ENCODE measurements at regions of chr11 and their contacts with region 1.

Region 1: DNA sequence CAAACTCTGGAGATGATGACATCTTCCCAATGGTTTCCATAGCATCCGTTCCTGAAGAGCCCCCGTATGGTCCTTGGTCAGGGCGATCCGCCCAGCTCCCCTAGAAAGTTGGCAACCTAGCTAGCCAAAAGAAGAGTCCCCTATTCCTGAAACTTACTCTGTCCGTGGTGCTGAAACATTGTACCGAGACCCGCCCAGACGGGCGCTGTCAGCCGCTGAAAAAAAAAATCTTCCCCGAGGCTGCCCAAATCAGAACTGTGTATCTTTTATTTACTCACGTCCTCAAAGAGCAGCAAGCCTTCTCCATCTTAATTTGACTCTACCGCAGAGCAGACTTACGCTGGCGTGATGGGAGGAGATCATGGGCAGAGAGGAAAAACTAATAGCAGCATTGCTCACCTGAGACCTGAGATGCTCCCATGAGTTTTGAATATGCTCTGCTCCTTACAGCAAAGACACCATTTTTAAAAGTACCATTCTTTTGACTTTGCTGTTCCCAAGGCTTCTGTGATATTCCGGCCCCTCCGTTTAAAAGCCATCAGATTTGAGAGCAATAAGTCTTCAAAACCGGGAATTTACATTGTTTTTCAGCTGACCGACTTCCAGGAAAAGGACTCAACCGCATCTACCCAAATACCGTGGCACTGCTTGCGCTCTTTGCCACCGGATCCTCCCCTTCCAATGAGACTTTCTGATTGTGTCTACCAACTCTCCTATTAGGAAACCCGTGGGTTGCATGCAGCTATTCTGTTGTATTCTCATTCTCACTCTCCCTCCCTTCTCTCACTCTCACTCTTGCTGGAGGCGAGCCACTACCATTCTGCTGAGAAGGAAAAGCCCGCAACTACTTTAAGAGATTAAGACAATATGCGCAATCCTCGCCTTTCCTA is at the start of gene SLC17A6:
- DNase-seq: peak in 1 of 2 experiments; percentile 58
- H3K4me3 ChIP-seq: no peak within 1 kb of the TSS
- H3K4me3 Mint-ChIP-seq: no peak within 1 kb of the TSS
- H3K27ac Mint-ChIP-seq: no peak within 1 kb of the TSS
- H3K4me1 ChIP-seq: no peaks in the 10 kb centered on the region
- H3K4me1 Mint-ChIP-seq: no peaks in the 10 kb centered on the region
- H3K27me3 ChIP-seq: no peaks in the 10 kb centered on the region
- H3K27me3 Mint-ChIP-seq: peaks cover 12% of the 10 kb centered on the region
- CTCF ChIP-seq: no peak
- total RNA-seq, gene SLC17A6: not detected in 2 replicates

Region 2: GRCh38 chr11:22349491-22349890 is 11.7 kb after region 1 on chr11:
- CTCF ChIA-PET with region 1: no interaction called
- POLR2A ChIA-PET with region 1: no interaction called
- intact Hi-C with region 1: no loop called
- DNase-seq: no peak
- H3K4me3 ChIP-seq: no peak overlapping the region
- H3K4me3 Mint-ChIP-seq: no peak overlapping the region
- H3K27ac Mint-ChIP-seq: no peak overlapping the region
- H3K4me1 ChIP-seq: no peaks in the 10 kb centered on the region
- H3K4me1 Mint-ChIP-seq: no peaks in the 10 kb centered on the region
- H3K27me3 ChIP-seq: no peaks in the 10 kb centered on the region
- H3K27me3 Mint-ChIP-seq: peaks cover 8% of the 10 kb centered on the region
- CTCF ChIP-seq: no peak

Region 3: GRCh38 chr11:22472306-22472705 is 134.5 kb after region 1 on chr11:
- CTCF ChIA-PET with region 1: no interaction called
- POLR2A ChIA-PET with region 1: no interaction called
- intact Hi-C with region 1: loop called (anchors 1 kb)
- DNase-seq: no peak
- H3K4me3 ChIP-seq: no peak overlapping the region
- H3K4me3 Mint-ChIP-seq: no peak overlapping the region
- H3K27ac Mint-ChIP-seq: no peak overlapping the region
- H3K4me1 ChIP-seq: no peaks in the 10 kb centered on the region
- H3K4me1 Mint-ChIP-seq: peaks cover 4% of the 10 kb centered on the region
- H3K27me3 ChIP-seq: no peaks in the 10 kb centered on the region
- H3K27me3 Mint-ChIP-seq: no peaks in the 10 kb centered on the region
- CTCF ChIP-seq: peak in 1 of 2 experiments; percentile 19

Region 4: GRCh38 chr11:22539821-22540256 is 202.0 kb after region 1 on chr11:
- CTCF ChIA-PET with region 1: no interaction called
- POLR2A ChIA-PET with region 1: no interaction called
- intact Hi-C with region 1: loop called (anchors 1 kb)
- DNase-seq: peak in 1 of 2 experiments; percentile 31
- H3K4me3 ChIP-seq: no peak overlapping the region
- H3K4me3 Mint-ChIP-seq: no peak overlapping the region
- H3K27ac Mint-ChIP-seq: no peak overlapping the region
- H3K4me1 ChIP-seq: no peaks in the 10 kb centered on the region
- H3K4me1 Mint-ChIP-seq: no peaks in the 10 kb centered on the region
- H3K27me3 ChIP-seq: no peaks in the 10 kb centered on the region
- H3K27me3 Mint-ChIP-seq: peaks cover 8% of the 10 kb centered on the region
- CTCF ChIP-seq: peak; percentile 39 to 56

Region 5: GRCh38 chr11:22829231-22830081 is 491.6 kb after region 1 on chr11 and contains the start of gene SVIP:
- CTCF ChIA-PET with region 1: no interaction called
- POLR2A ChIA-PET with region 1: no interaction called
- intact Hi-C with region 1: loop called (anchors 5 kb)
- DNase-seq: peak; percentile 96 to 97
- H3K4me3 ChIP-seq: peak within 1 kb of the TSS; percentile 92
- H3K4me3 Mint-ChIP-seq: peak within 1 kb of the TSS; percentile 87
- H3K27ac Mint-ChIP-seq: peak within 1 kb of the TSS; percentile 66
- H3K4me1 ChIP-seq: peaks cover 14% of the 10 kb centered on the region
- H3K4me1 Mint-ChIP-seq: peaks cover 15% of the 10 kb centered on the region
- H3K27me3 ChIP-seq: no peaks in the 10 kb centered on the region
- H3K27me3 Mint-ChIP-seq: no peaks in the 10 kb centered on the region
- CTCF ChIP-seq: peak; percentile 46 to 93
- total RNA-seq, gene SVIP: 19.6 and 21.0 TPM in 2 replicates